HepG2 (cell line): ENCODE measurements at regions of chr11 and their contacts with region 1.

Region 1: DNA sequence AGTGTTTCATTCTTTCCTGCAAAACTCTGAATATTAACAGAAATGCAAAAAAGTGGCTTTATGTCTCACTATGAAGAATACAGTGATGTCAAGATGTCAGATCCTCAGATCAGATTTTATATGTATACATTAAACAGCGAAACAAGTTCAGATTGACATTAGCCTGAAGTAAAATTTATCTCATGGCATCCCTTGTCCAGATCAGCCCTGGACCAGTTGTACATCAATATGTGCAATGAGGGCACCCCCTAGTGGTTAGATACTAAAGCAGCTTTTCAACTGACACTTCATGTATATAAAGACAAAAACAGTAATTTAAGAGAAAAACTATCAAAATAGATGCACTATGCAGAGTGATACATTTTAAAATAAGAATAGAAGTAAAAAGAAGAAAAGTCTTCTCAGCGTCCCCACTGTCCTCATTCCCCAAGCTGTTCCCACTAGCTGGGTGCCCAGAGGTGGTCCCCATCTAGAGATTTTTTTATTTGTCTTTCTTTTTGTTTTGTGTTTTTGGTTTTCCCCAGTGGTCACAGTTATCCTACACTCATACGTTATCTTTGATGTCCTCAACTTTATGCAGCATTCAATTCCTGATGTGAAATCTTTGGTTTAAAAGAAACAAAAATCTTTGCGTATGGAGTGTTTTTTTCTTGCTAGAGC is 2193.4 kb upstream of the RAG2 start:
- DNase-seq: peak; percentile 54
- ATAC-seq: peak; percentile 79
- H3K4me3 ChIP-seq: no peak overlapping the region
- H3K27ac ChIP-seq: no peak overlapping the region
- H3K4me1 ChIP-seq: no peaks in the 10 kb centered on the region
- H3K27me3 ChIP-seq: no peaks in the 10 kb centered on the region
- CTCF ChIP-seq: peak; percentile 68
- EP300 ChIP-seq: no peak
- POLR2A ChIP-seq: no peak
- RAD21 ChIP-seq: no peak

Region 2: GRCh38 chr11:37449146-37449545 is 1342.3 kb before region 1 on chr11:
- CTCF ChIA-PET with region 1: no interaction called
- POLR2A ChIA-PET with region 1: no interaction called
- in situ Hi-C with region 1: no loop called
- intact Hi-C with region 1: loop called (anchors 1 kb)
- DNase-seq: no peak
- ATAC-seq: no peak
- H3K4me3 ChIP-seq: no peak overlapping the region
- H3K27ac ChIP-seq: no peak overlapping the region
- H3K4me1 ChIP-seq: no peaks in the 10 kb centered on the region
- H3K27me3 ChIP-seq: no peaks in the 10 kb centered on the region
- CTCF ChIP-seq: no peak
- EP300 ChIP-seq: no peak
- POLR2A ChIP-seq: no peak
- RAD21 ChIP-seq: no peak

Region 3: GRCh38 chr11:38721586-38722315 is 69.7 kb before region 1 on chr11:
- CTCF ChIA-PET with region 1: no interaction called
- POLR2A ChIA-PET with region 1: no interaction called
- in situ Hi-C with region 1: no loop called
- intact Hi-C with region 1: no loop called
- DNase-seq: no peak
- ATAC-seq: no peak
- H3K4me3 ChIP-seq: no peak overlapping the region
- H3K27ac ChIP-seq: no peak overlapping the region
- H3K4me1 ChIP-seq: no peaks in the 10 kb centered on the region
- H3K27me3 ChIP-seq: no peaks in the 10 kb centered on the region
- CTCF ChIP-seq: no peak
- EP300 ChIP-seq: no peak
- POLR2A ChIP-seq: no peak
- RAD21 ChIP-seq: no peak